ENCODE measurements at regions of chr12 and their contacts with region 1.

Region 1: DNA sequence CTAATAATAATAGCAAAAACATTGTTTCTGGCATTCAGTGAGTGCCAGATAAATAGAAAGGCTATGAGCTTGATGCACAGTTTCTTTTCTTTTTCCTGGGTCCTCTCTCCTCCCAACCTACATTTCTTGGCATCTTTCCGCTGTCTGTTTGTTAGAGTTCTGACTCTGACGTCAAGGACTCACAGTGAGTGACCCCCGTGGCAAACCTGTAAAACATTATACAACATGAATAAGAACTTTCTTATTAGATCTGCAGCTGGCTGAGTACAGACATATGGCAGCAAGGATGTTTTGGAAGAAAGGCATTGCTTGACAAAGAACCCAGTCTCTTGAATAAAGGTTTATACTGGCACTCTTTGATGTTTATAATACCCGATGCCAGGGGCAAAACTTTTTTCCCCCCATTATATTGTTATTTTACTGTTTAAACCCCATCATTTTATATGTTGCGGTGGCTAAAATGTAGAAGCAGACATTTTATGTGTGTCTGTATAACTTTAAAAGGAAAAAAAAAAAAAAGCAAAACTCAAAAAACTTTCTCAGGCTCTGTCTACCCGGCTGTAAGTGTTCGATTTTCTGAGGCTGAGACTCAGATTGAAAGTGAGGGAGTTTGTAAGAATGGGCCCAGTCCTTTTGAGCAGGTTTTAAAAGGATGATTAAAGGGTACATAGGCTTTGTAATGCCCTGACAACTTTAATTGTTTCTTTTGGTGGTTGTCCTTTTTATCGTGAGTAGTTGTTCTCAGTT is 159.3 kb downstream of the PDE3A start:
- DNase-seq: no peak
- ATAC-seq: peak in 3 of 4 donors; percentile 16 to 60 (median 35)
- H3K4me3 ChIP-seq: no peak overlapping the region
- H3K27ac ChIP-seq: peak overlapping the region in 9 of 12 donors; percentile 9 to 70 (median 39)
- H3K4me1 ChIP-seq: peaks cover 0 to 40% (median 16%) of the 10 kb centered on the region in 12 donors
- H3K27me3 ChIP-seq: no peaks in the 10 kb centered on the region
- CTCF ChIP-seq: no peak
- POLR2A ChIP-seq: no peak

Region 2: GRCh38 chr12:20125276-20125798 is 402.3 kb before region 1 on chr12:
- intact Hi-C with region 1: loop called in 1 of 10 experiments (anchors 10 kb)
- DNase-seq: no peak
- ATAC-seq: peak in 2 of 4 donors; percentile 41 to 81
- H3K4me3 ChIP-seq: no peak overlapping the region
- H3K27ac ChIP-seq: peak overlapping the region in 1 of 12 donors; percentile 4
- H3K4me1 ChIP-seq: peaks cover 0 to 22% (median 0%) of the 10 kb centered on the region in 12 donors
- H3K27me3 ChIP-seq: no peaks in the 10 kb centered on the region
- CTCF ChIP-seq: no peak
- POLR2A ChIP-seq: no peak

Measured in heart left ventricle (tissue), 16 donors.